MCF 10A (cell line): ENCODE measurements at regions of chr17 and their contacts with region 1.

Region 1: GRCh38 chr17:4891411-4892342 is 7.7 kb upstream of the C17orf107 start:
- DNase-seq: no peak
- H3K4me3 Mint-ChIP-seq: no peak overlapping the region
- H3K27ac Mint-ChIP-seq: no peak overlapping the region
- H3K4me1 Mint-ChIP-seq: no peaks in the 10 kb centered on the region
- H3K27me3 Mint-ChIP-seq: no peaks in the 10 kb centered on the region
- CTCF ChIP-seq: no peak

Region 2: GRCh38 chr17:4709794-4710692 is 181.6 kb before region 1 on chr17 and contains the start of gene ARRB2:
- CTCF ChIA-PET with region 1: no interaction called
- POLR2A ChIA-PET with region 1: no interaction called
- intact Hi-C with region 1: loop called (anchors 2 kb)
- DNase-seq: peak; percentile 97
- H3K4me3 Mint-ChIP-seq: peak within 1 kb of the TSS; percentile 66
- H3K27ac Mint-ChIP-seq: peak within 1 kb of the TSS; percentile 53
- H3K4me1 Mint-ChIP-seq: peaks cover 11% of the 10 kb centered on the region
- H3K27me3 Mint-ChIP-seq: no peaks in the 10 kb centered on the region
- CTCF ChIP-seq: peak; percentile 55
- total RNA-seq, gene ARRB2: 20.7 and 25.1 TPM in 2 replicates

Region 3: GRCh38 chr17:4733073-4733531 is 158.6 kb before region 1 on chr17:
- CTCF ChIA-PET with region 1: interaction called, 6 read pairs
- POLR2A ChIA-PET with region 1: interaction called, 5 read pairs
- intact Hi-C with region 1: loop called (anchors 1 kb)
- DNase-seq: no peak
- H3K4me3 Mint-ChIP-seq: no peak overlapping the region
- H3K27ac Mint-ChIP-seq: no peak overlapping the region
- H3K4me1 Mint-ChIP-seq: peaks cover 22% of the 10 kb centered on the region
- H3K27me3 Mint-ChIP-seq: no peaks in the 10 kb centered on the region
- CTCF ChIP-seq: no peak

Region 4: DNA sequence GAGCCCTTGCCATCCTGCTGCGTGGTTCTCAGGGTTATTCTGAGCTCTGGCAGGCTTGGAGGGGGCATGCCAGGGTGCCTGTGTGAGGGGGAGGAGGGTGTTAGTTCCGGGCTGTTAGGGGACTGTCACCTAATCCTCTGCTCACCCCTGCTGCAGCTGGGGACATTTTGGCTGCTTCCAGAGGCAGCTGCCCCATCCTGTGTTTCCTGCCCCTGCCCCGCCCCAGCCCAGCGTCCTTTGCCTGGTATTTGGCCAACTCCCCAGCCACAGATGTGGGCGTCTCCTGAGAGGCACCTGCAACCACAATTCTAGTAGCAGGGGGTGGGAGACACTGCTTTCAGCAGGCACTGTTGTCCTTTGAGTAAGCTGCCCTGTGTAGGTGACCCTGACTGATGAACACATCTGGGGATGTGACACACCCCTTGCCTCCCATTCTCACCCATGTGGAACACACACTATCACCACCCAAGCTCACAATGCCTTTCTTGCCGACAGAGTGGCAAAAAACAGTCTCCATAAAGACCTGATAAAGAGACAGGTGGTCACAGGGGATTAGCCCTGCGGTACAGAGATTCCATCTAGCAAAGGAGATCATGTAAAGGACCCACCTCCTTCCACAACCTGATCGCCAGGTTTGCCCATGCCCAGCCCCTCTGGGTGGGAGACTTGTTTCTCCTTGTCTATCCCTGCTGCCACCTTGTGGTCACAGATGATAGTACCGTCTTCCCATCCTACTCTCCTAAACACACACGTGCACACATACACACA is 11.6 kb after region 1 on chr17 and contains the start of gene CHRNE:
- CTCF ChIA-PET with region 1: interaction called, 38 read pairs
- POLR2A ChIA-PET with region 1: interaction called, 5 read pairs
- intact Hi-C with region 1: no loop called
- DNase-seq: peak; percentile 87
- H3K4me3 Mint-ChIP-seq: peak within 1 kb of the TSS; percentile 13
- H3K27ac Mint-ChIP-seq: peak within 1 kb of the TSS; percentile 71
- H3K4me1 Mint-ChIP-seq: peaks cover 17% of the 10 kb centered on the region
- H3K27me3 Mint-ChIP-seq: no peaks in the 10 kb centered on the region
- CTCF ChIP-seq: peak; percentile 66
- total RNA-seq, gene CHRNE: not detected in 2 replicates